ENCODE measurements at regions of chr11 and their contacts with region 1.

Region 1: DNA sequence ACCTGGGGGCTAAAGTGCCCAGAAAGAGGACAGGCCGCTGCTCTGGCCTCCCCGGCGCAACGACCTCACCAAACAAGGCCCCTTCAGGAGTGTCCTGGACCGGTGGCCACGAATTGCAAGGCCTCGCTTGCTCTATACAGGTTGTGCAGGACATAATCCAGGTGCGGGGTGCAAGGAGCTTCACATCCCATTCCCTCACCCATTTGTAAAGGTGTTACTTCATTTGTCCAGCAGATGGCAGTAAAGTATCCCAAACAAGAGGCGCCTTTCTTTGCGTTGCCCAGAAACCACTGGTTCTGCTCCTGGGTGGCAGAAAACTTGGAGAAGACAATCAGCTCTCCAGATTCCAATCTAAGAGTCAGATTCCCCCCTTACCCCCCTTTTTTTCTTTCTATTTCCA is 35.9 kb upstream of the PRDM11 start:
- DNase-seq: peak; percentile 69

Region 2: GRCh38 chr11:45000918-45001317 is 109.6 kb before region 1 on chr11:
- CTCF ChIA-PET with region 1: no interaction called
- POLR2A ChIA-PET with region 1: no interaction called
- DNase-seq: no peak

Region 3: GRCh38 chr11:45332276-45332934 is 221.8 kb after region 1 on chr11:
- CTCF ChIA-PET with region 1: interaction called, 15 read pairs
- POLR2A ChIA-PET with region 1: no interaction called
- DNase-seq: peak; percentile 73